Activated naive CD4-positive, alpha-beta T cell treated with anti-CD3 and anti-CD28 coated beads for 36 hours (primary cell): ENCODE measurements at regions of chr6 and their contacts with region 1.

Region 1: DNA sequence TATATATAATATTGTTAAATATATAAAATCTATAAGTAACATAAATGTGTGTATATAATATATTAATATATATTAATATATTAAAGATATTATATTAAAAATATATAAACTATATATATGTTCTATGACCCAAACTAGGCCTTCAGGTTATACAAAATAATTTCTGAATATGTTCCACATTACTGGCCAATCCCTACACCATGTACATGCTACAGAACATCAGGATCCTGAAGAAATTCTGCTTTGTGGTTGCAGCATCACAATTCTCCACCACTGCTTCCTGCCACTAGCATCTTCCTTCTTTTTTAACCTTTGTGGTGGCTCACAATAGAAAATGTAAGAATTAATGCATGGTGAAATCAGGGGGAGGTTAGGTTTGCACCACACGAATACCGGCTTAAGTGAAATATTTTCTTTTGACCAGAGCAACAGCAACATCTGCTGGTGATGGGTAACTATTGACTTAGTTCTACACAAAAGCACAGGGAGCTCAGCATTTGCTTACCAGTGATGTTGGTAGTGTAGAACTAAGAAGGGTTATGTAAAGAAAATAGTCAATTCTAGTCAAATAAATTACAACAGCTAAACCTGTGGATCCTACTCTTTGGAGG is 280.6 kb downstream of the SYNE1 start:
- DNase-seq: peak; percentile 16
- H3K4me3 Mint-ChIP-seq: no peak overlapping the region
- H3K27ac Mint-ChIP-seq: no peak overlapping the region
- H3K4me1 Mint-ChIP-seq: peaks cover 2% of the 10 kb centered on the region
- H3K27me3 Mint-ChIP-seq: no peaks in the 10 kb centered on the region

Region 2: DNA sequence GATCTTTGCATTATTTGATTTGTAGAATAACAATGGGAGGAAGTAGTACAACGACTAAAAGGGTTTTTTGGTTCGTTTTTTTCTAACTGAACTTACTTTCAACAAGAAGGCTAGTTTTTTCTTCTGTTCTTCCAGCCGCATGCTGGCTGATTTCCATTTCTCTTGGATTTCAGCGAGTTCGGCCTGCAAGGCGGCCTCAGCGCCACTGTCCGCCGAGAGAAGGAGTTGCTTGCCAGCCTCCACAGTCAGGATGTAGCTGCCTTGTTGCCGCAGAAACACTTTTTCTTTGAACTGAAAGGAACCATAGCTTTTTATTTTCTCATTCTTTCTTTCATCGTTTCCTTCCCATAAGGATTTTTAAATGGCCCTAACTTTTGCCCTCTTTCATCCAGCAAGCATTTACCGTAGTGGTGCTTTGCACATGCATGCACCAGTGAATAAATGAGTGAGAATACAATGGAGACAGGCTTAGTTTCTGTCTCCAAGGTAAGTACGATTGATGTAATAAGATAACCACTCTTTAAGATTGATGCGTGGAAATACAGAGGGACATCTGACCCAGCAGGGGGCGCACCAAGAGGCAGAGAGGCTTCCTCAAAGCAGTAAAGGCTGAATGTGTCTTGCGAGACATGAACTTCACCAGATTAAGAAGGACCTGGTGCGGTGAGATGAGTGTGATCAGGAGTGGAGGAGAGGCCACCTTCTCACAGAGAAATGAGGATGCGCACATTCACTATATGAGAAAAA is 150.3 kb before region 1 on chr6:
- CTCF ChIA-PET with region 1: no interaction called
- intact Hi-C with region 1: loop called (anchors 5 kb)
- DNase-seq: peak; percentile 66
- H3K4me3 Mint-ChIP-seq: no peak overlapping the region
- H3K27ac Mint-ChIP-seq: no peak overlapping the region
- H3K4me1 Mint-ChIP-seq: peaks cover 6% of the 10 kb centered on the region
- H3K27me3 Mint-ChIP-seq: no peaks in the 10 kb centered on the region

Region 3: GRCh38 chr6:152458648-152459644 is 102.4 kb after region 1 on chr6:
- CTCF ChIA-PET with region 1: no interaction called
- intact Hi-C with region 1: no loop called
- DNase-seq: no peak
- H3K4me3 Mint-ChIP-seq: no peak overlapping the region
- H3K27ac Mint-ChIP-seq: no peak overlapping the region
- H3K4me1 Mint-ChIP-seq: peaks cover 10% of the 10 kb centered on the region
- H3K27me3 Mint-ChIP-seq: peaks cover 19% of the 10 kb centered on the region

Region 4: GRCh38 chr6:152609188-152609587 is 252.6 kb after region 1 on chr6:
- CTCF ChIA-PET with region 1: no interaction called
- intact Hi-C with region 1: no loop called
- DNase-seq: no peak
- H3K4me3 Mint-ChIP-seq: no peak overlapping the region
- H3K27ac Mint-ChIP-seq: no peak overlapping the region
- H3K4me1 Mint-ChIP-seq: no peaks in the 10 kb centered on the region
- H3K27me3 Mint-ChIP-seq: no peaks in the 10 kb centered on the region